PC-3 (cell line): ENCODE measurements at regions of chr17 and their contacts with region 1.

Region 1: GRCh38 chr17:63697341-63698286 is 2.3 kb downstream of the LIMD2 start:
- DNase-seq: peak; percentile 74
- ATAC-seq: peak; percentile 11
- H3K4me3 ChIP-seq: no peak overlapping the region
- H3K27ac ChIP-seq: no peak overlapping the region
- H3K4me1 ChIP-seq: peaks cover 7% of the 10 kb centered on the region; the same call in 1 of the 2 replicates
- H3K27me3 ChIP-seq: no peaks in the 10 kb centered on the region
- CTCF ChIP-seq: peak; percentile 89

Region 2: DNA sequence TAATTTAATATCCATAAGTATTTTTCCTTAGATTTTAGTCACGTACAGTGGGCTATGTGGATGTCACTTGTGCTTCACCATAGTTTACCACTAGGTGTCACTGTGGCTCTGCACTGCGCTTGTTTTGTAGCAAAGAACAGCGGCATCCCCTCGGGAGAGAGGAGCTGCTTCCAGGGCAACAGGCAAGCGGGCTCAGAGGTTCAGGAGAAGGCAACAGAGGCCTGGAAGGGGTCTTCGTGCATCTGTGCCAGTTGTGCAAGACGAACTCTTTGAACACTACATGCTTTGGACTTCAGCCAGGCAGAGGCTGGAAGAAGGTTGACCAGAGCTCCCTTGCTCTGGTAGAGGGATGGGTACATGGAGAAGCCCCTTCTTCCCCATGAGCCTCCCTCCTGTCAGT is 272.1 kb before region 1 on chr17:
- CTCF ChIA-PET with region 1: no interaction called
- POLR2A ChIA-PET with region 1: no interaction called
- intact Hi-C with region 1: loop called (anchors 10 kb)
- DNase-seq: peak; percentile 96
- ATAC-seq: peak; percentile 77
- H3K4me3 ChIP-seq: no peak overlapping the region
- H3K27ac ChIP-seq: no peak overlapping the region
- H3K4me1 ChIP-seq: peaks cover 20% of the 10 kb centered on the region
- H3K27me3 ChIP-seq: no peaks in the 10 kb centered on the region
- CTCF ChIP-seq: peak; percentile 98

Region 3: GRCh38 chr17:63621766-63622519 is 75.7 kb before region 1 on chr17 and contains the start of gene MAP3K3:
- CTCF ChIA-PET with region 1: no interaction called
- POLR2A ChIA-PET with region 1: no interaction called
- intact Hi-C with region 1: loop called (anchors 5 kb)
- DNase-seq: peak; percentile 100
- ATAC-seq: peak; percentile 86
- H3K4me3 ChIP-seq: peak within 1 kb of the TSS; percentile 82
- H3K27ac ChIP-seq: peak within 1 kb of the TSS; percentile 11; the same call in 1 of the 2 replicates
- H3K4me1 ChIP-seq: peaks cover 26% of the 10 kb centered on the region
- H3K27me3 ChIP-seq: no peaks in the 10 kb centered on the region
- CTCF ChIP-seq: no peak; the same call in 1 of the 2 replicates
- total RNA-seq, gene MAP3K3: 27.1 and 36.1 TPM in 2 replicates

Region 4: DNA sequence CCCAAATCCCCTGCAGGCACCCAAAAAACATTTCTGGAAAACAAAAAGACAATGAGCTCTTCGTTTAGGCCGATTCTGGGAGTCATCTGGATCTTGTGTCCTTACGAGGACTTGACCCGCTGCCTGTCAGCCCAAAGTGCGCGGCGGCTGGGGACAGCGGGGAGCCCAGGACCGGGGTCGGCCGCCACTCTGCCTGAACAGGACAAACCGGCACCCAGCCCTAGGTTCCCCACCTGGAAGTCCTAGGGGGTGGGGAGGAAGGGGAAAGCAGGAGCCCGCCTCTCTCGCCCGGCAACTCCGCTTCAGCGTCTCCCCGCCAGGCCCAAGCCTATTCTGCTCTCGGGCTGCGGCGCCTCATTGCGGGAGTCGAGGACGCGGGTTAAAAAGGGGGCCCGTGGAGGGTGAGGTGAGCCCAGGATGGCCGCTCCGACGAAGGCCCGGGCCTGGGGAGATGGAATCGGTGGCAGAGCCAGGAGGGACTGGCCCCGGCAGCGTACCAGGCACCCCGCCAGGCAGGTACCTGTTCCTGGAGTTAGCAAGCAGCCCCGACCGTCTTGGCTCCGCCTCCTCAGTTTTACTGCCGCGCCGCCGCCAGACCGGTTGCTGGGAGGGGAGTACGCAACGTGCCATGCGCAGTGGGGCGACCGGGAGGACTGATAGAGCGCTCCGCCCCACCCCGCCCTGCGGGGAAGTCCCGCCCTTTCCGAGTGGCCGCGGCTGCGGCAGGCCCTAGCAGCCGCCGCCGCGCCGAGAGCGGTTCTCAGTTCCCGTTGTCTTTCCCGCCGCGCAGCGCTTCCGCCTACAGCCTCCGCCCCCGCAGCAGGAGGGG is 43.8 kb after region 1 on chr17 and contains the start of gene STRADA:
- CTCF ChIA-PET with region 1: interaction called, 3 read pairs
- POLR2A ChIA-PET with region 1: interaction called, 15 read pairs
- intact Hi-C with region 1: loop called (anchors 2 kb)
- DNase-seq: peak; percentile 100
- ATAC-seq: peak; percentile 87
- H3K4me3 ChIP-seq: peak within 1 kb of the TSS; percentile 87
- H3K27ac ChIP-seq: peak within 1 kb of the TSS; percentile 66
- H3K4me1 ChIP-seq: peaks cover 15% of the 10 kb centered on the region; the same call in 1 of the 2 replicates
- H3K27me3 ChIP-seq: no peaks in the 10 kb centered on the region
- CTCF ChIP-seq: no peak
- total RNA-seq, gene STRADA: 17.9 and 26.3 TPM in 2 replicates

Region 5: GRCh38 chr17:63827002-63827771 is 129.6 kb after region 1 on chr17 and contains the starts of genes FTSJ3 and PSMC5:
- CTCF ChIA-PET with region 1: no interaction called
- POLR2A ChIA-PET with region 1: no interaction called
- intact Hi-C with region 1: loop called (anchors 5 kb)
- DNase-seq: peak; percentile 97
- ATAC-seq: peak; percentile 91
- H3K4me3 ChIP-seq: peak within 1 kb of the TSS; percentile 89
- H3K27ac ChIP-seq: peak within 1 kb of the TSS; percentile 81
- H3K4me1 ChIP-seq: peaks cover 22% of the 10 kb centered on the region
- H3K27me3 ChIP-seq: no peaks in the 10 kb centered on the region
- CTCF ChIP-seq: peak; percentile 63
- total RNA-seq, gene FTSJ3: 82.4 and 112 TPM in 2 replicates
- total RNA-seq, gene PSMC5: 163 and 205 TPM in 2 replicates

Region 6: GRCh38 chr17:63859257-63859656 is 161.6 kb after region 1 on chr17:
- CTCF ChIA-PET with region 1: no interaction called
- POLR2A ChIA-PET with region 1: no interaction called
- intact Hi-C with region 1: no loop called
- DNase-seq: peak; percentile 18
- ATAC-seq: peak; percentile 42; the same call in 1 of the 2 replicates
- H3K4me3 ChIP-seq: no peak overlapping the region
- H3K27ac ChIP-seq: no peak overlapping the region
- H3K4me1 ChIP-seq: no peaks in the 10 kb centered on the region
- H3K27me3 ChIP-seq: peaks cover 8% of the 10 kb centered on the region; the same call in 1 of the 2 replicates
- CTCF ChIP-seq: no peak